Right ventricle myocardium inferior (tissue), 1 donor: ENCODE measurements at regions of chr15 and their contacts with region 1.

Region 1: GRCh38 chr15:59656897-59657634 is at the start of gene GTF2A2:
- DNase-seq: peak; percentile 97
- ATAC-seq: peak; percentile 100
- total RNA-seq, gene GTF2A2: 127 TPM

Region 2: GRCh38 chr15:59688841-59689625 is 32.0 kb after region 1 on chr15 and contains the start of gene BNIP2:
- intact Hi-C with region 1: loop called (anchors 2 kb)
- DNase-seq: peak; percentile 100
- ATAC-seq: peak; percentile 98
- total RNA-seq, gene BNIP2: 73.2 TPM